RWPE1 (cell line): ENCODE measurements at regions of chr17 and their contacts with region 1.

Region 1: DNA sequence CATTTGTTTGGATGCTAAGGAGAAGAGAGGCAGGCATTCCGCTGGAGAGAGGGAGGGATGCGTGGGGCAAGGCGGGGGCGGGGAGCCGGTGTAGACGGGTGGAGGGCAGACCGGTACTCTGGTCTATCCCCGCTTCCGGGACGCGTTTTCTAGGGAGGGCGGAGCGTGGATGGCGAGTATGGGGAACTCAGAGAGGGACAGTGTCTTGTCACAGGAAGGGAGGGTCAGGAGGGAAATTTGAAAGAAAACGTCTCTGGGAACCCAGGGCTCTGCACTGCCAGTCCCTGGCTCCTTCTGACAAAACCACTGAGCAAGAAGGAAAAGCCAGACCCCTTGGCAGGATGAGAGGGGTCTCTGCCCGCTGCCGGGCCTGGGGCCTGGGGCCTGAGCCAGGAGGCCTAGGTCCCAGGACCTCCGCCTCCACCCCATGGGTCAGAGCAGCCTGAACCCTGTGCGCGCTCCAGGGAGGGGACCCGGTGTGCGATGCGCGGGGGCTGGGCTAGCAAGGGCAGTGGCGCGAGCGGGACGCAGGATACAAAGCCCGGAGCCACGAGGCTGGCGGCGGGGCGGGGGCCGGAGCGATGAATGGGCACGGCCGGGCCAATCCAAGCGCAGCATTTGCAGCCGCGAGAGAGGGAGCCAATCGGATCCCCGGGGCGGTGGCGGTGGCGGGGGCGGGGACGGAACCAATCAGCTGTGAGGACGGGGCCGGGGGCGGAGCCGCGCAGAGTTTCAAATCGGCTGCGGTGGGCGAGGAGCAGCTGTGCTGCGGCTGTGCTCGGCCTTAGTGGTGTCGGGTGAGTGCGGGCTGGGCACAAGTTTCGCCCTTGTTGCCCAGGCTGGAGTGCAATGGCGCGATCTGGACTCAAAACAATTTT is at the start of gene PIMREG:
- DNase-seq: peak; percentile 99
- H3K27ac ChIP-seq: peak within 1 kb of the TSS; percentile 94
- CTCF ChIP-seq: no peak

Region 2: GRCh38 chr17:6384481-6384880 is 59.5 kb before region 1 on chr17:
- CTCF ChIA-PET with region 1: no interaction called
- POLR2A ChIA-PET with region 1: interaction called, 10 read pairs
- DNase-seq: no peak
- H3K27ac ChIP-seq: no peak overlapping the region
- CTCF ChIP-seq: no peak

Region 3: GRCh38 chr17:6427279-6427781 is 16.6 kb before region 1 on chr17:
- CTCF ChIA-PET with region 1: no interaction called
- POLR2A ChIA-PET with region 1: no interaction called
- DNase-seq: no peak
- H3K27ac ChIP-seq: no peak overlapping the region
- CTCF ChIP-seq: no peak

Region 4: DNA sequence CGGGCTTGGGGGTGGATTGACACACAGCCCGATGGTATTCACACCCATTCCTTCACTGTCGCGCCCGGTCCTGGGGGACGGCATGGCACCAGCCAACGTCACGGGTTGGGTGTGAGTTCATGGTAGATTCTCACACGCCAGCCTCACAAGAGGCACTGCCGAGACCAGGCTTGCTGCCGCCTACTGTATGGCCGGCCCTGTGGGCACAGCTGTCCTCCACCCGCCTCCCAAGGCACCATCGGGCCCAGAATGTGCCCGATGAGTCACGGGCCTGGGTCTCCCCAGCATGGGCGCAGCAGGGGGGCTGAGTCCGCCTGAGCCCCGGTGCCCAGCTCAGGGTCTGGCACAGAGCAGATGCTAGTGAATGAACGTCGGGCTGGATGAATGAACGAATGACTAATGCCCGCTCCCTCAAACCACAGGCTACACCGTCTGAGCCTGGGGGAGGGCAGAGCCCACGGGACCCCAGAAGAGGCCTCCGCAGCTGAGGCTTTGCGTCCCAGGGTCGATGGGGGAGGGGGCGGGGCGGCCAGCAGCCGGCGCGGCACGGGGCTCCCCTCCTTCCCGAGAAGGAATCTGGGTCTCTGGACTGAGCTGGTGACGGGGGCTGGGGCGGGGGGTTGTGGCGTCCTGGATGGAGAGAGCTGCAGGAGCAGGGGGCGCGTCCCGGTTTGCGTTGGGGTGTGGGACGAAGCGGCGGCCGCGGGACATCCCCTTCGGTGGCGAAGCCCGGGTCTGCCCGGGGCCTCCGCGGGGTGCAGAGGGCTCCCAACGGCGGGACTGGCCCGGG is 111.6 kb after region 1 on chr17:
- CTCF ChIA-PET with region 1: no interaction called
- POLR2A ChIA-PET with region 1: no interaction called
- DNase-seq: peak; percentile 34
- H3K27ac ChIP-seq: peak overlapping the region; percentile 100
- CTCF ChIP-seq: no peak

Region 5: GRCh38 chr17:6591599-6592158 is 147.7 kb after region 1 on chr17:
- CTCF ChIA-PET with region 1: no interaction called
- POLR2A ChIA-PET with region 1: interaction called, 16 read pairs
- DNase-seq: peak; percentile 44
- H3K27ac ChIP-seq: peak overlapping the region; percentile 86
- CTCF ChIP-seq: no peak